RWPE1 (cell line): ENCODE measurements at regions of chr16 and their contacts with region 1.

Region 1: DNA sequence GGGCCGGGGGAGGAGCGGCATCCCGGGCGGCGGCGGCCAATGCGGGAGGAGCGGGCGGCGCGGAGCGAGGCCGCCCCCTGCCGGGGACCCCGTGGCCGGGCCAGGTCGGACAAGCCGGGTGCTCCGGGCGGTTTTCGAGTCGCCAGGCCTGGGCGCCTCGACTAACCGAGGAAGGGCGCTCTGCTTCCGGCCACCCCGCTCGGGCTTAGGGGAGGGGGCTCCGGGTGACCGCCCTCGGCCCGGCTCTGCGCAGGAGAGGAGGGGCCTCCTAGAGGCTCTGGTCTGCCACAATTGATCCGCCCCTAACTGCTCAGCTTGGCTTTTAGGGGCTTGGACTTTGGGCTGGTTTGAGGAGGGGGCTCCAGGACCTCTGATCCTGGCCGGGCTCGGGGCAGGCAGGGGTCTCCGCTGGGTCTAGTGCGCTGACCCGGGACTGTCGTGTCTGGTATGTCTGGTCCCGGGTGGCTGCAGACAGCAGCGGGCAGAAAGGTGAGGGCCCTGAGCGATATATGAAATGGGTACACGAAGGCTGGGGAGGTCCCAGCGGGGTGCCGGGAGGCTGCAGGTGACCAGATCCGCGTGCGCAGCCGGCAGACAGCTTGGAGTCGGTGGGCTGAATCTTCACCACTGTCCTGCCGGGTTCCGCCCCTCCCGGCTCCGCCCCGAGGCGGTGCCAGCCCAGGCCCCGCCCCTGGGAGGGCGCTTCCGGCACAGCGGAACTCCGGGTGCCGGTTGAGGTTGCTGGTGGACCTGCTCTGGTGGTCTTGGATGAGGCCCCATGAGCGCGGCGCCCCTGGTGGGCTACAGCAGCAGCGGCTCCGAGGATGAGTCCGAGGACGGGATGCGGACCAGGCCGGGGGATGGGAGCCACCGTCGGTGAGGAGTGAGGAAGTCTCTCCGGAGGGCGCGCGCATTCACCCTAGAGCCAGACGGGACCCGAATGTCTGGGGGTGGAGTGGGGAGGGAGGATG is at the start of gene USB1:
- DNase-seq: peak; percentile 88
- H3K27ac ChIP-seq: peak within 1 kb of the TSS; percentile 86
- CTCF ChIP-seq: peak; percentile 83

Region 2: DNA sequence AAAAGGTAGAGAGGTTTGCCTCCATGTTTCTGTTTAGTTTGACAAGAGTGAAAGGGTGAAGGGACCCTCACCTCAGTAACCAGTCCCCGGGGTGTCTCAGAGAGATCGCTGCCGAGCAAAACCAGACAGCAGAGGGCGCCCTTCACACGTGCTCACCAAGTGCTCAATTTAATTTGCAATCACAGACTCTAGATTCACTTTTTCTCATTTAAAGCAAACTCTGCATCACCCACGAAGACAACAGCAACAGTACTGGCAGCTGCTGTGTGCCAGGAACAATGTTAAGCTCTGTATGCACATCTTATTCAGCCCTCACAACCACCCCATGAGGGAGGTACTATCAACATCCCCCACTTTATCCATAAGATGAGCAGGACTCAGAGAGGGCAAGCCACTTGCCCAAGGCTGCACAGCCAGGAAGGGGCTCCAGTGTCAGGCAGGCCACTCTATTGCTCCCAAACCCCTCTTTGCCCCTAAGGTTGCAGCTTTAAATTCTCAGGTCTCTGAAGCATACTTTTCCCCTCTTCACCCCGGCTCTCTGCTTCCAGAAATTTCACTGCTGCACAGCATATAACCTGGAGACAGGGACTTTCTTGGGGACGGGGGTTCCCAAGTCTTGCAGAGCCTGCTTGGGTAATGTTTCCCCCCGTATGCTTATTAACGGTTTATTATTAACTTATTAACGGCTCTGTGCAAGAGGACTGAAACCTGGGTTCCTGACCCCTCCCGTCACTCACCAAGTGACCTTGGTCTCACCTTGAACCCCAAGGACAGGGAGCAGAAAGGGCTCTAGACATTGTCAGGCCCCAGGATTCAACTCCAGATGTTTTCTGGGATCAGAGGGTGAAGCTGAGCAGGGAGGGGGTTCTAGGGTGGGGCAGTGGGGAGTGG is 101.0 kb before region 1 on chr16:
- CTCF ChIA-PET with region 1: interaction called, 36 read pairs
- POLR2A ChIA-PET with region 1: no interaction called
- DNase-seq: peak; percentile 59
- H3K27ac ChIP-seq: no peak overlapping the region
- CTCF ChIP-seq: peak; percentile 91

Region 3: DNA sequence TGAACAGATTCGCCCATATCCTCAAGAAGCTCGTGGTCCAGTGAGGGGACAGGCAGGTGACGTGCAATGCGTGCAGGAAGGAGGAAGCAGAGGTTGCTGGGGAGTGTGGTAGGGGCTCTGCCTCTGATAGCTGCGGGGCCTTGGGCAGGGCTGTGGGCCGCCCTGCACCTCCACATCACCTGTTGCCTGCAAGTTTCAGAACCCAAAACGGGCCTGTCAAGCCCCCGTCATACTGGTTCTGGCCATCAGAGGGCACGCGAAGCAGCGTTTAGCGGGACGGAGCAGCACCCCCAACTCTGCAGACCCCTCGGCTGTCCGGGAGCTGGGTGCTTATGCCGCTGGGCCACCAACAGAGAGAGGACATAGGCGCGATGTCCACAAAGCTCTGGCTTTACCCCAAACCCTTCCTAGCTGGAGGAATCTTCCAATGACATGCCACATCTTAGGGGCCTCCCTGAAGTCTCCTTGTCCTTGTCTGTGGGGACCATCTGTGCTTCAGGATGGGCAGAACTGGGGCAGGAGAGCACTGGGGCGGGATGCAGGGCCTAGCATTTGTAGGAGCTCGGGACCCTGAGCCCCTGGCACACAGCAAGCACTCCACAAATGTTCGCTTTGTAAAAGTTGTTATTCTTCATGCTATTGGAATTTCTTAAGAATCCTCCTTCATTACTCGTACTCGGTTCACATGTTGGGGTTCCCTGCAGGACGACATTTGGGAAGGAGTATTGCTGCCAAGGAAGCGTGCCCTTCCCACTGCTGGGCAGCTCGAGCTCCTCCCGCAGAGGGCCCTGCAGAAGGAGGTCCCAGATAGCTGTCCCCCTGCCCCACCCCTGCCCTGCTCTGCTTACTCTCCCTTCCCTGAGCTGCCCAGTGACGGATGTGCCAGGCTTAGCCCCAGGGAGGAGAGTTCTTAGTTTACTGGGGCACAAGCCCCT is 94.3 kb before region 1 on chr16:
- CTCF ChIA-PET with region 1: interaction called, 36 read pairs
- POLR2A ChIA-PET with region 1: no interaction called
- DNase-seq: no peak
- H3K27ac ChIP-seq: peak overlapping the region; percentile 18
- CTCF ChIP-seq: peak; percentile 68